ENCODE measurements at regions of chr11 and their contacts with region 1.

Region 1: GRCh38 chr11:119018074-119018938 is at the starts of genes RPS25 and TRAPPC4:
- DNase-seq: peak; percentile 91
- ATAC-seq: peak; percentile 92
- H3K4me3 Mint-ChIP-seq: peak within 1 kb of the TSS; percentile 99
- H3K27ac Mint-ChIP-seq: peak within 1 kb of the TSS; percentile 100
- H3K4me1 Mint-ChIP-seq: peaks cover 26% of the 10 kb centered on the region
- H3K27me3 Mint-ChIP-seq: no peaks in the 10 kb centered on the region
- total RNA-seq, gene RPS25: 1,397 to 1,460 TPM
- total RNA-seq, gene TRAPPC4: 80.5 to 84.4 TPM

Region 2: DNA sequence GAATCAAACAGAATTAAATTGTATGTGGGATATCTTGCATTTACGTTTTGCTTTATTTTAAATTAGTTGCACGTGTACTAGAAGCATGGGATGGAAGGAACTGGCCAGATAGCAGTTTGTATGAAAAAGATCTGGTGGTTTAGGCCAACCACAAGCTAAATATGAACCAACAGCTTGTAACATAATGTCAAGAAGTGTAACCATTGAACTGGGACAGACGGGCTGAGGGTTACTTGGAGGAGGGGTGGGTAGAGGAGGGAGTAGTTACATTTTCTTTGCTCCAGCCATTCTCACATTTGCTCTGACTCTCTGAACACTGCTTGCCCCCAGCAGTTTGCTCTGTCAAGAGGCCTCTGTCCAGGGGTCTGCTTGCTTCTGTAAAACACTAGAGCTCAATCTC is 166.3 kb before region 1 on chr11:
- POLR2A ChIA-PET with region 1: no interaction called
- DNase-seq: no peak
- ATAC-seq: no peak
- H3K4me3 Mint-ChIP-seq: no peak overlapping the region
- H3K27ac Mint-ChIP-seq: no peak overlapping the region
- H3K4me1 Mint-ChIP-seq: peaks cover 18% of the 10 kb centered on the region
- H3K27me3 Mint-ChIP-seq: no peaks in the 10 kb centered on the region

Region 3: DNA sequence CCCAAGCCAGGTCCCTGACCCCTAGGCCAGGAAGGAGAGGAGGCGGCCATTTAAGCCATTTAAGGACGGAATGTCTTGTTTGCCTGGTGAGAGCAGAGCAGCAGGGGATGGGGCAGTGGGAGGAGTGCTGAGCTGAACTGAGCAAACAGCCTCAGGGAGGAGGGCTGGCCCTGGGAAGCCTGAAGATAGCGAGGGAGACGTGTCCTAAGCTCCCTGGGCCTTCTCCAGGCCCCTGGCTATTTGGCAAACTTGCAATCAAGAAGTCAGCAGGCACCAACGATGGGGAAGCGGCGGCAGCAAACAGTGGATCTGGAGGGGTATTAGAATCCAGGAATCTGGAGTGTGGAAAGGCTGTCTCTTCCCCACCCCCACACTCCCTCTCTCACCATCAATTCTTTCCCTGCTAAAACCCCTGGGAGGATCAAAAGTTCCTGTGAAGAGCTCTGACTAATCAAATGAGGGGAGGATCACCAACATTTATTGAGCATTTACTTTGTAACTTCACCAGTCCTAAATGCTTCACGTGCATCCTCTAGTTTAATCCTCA is 101.4 kb before region 1 on chr11:
- POLR2A ChIA-PET with region 1: no interaction called
- DNase-seq: no peak
- ATAC-seq: no peak
- H3K4me3 Mint-ChIP-seq: peak overlapping the region; percentile 84
- H3K27ac Mint-ChIP-seq: peak overlapping the region; percentile 98
- H3K4me1 Mint-ChIP-seq: peaks cover 84% of the 10 kb centered on the region
- H3K27me3 Mint-ChIP-seq: no peaks in the 10 kb centered on the region

Region 4: GRCh38 chr11:118997627-118998387 is 20.5 kb before region 1 on chr11 and contains the start of gene CENATAC:
- POLR2A ChIA-PET with region 1: interaction called, 34 read pairs
- DNase-seq: peak; percentile 97
- ATAC-seq: peak; percentile 96
- H3K4me3 Mint-ChIP-seq: peak within 1 kb of the TSS; percentile 100
- H3K27ac Mint-ChIP-seq: peak within 1 kb of the TSS; percentile 99
- H3K4me1 Mint-ChIP-seq: peaks cover 25% of the 10 kb centered on the region
- H3K27me3 Mint-ChIP-seq: no peaks in the 10 kb centered on the region
- total RNA-seq, gene CENATAC: 66.8 to 74.2 TPM

Region 5: DNA sequence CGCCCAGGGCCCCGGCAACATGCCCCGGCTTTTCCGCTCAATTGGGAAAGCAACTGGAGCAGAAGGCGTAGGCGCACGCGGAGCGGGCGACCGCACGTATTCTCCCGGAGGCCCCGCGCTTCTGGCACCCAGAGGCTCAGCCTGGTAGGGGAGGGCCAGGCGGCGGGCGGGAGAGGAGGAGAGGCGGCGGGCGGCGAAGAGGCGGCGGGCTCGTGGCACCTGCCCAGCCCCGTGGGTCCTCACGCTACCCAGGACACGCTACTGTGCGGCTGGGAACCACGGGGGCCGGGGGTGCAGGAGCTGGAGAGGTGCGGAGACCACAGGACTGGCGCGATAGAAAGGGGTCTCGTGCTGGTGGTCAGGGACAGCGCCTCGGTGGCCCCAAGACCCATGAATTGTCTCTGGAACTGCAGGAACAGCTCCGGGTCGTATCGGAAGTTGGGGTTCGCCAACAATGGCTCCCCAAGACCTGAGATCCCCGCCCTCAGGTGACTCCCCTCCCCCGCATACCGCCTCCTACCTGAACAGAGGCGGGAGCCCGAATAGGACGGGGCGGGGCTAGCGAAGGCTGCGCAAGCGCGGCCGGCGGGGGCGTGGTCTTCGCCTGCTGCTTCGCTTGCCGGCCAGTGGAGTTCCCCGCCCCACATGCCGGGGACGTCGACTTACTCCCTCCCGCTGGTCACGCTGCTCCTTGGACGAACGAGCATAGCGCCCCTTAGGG is 12.2 kb after region 1 on chr11 and contains the start of gene SLC37A4:
- POLR2A ChIA-PET with region 1: interaction called, 23 read pairs
- DNase-seq: peak; percentile 99
- ATAC-seq: peak; percentile 92
- H3K4me3 Mint-ChIP-seq: peak within 1 kb of the TSS; percentile 79
- H3K27ac Mint-ChIP-seq: peak within 1 kb of the TSS; percentile 68
- H3K4me1 Mint-ChIP-seq: peaks cover 17% of the 10 kb centered on the region
- H3K27me3 Mint-ChIP-seq: no peaks in the 10 kb centered on the region
- total RNA-seq, gene SLC37A4: 20.3 to 23.9 TPM